CD4-positive, alpha-beta memory T cell (primary cell): ENCODE measurements at regions of chr2 and their contacts with region 1.

Region 1: DNA sequence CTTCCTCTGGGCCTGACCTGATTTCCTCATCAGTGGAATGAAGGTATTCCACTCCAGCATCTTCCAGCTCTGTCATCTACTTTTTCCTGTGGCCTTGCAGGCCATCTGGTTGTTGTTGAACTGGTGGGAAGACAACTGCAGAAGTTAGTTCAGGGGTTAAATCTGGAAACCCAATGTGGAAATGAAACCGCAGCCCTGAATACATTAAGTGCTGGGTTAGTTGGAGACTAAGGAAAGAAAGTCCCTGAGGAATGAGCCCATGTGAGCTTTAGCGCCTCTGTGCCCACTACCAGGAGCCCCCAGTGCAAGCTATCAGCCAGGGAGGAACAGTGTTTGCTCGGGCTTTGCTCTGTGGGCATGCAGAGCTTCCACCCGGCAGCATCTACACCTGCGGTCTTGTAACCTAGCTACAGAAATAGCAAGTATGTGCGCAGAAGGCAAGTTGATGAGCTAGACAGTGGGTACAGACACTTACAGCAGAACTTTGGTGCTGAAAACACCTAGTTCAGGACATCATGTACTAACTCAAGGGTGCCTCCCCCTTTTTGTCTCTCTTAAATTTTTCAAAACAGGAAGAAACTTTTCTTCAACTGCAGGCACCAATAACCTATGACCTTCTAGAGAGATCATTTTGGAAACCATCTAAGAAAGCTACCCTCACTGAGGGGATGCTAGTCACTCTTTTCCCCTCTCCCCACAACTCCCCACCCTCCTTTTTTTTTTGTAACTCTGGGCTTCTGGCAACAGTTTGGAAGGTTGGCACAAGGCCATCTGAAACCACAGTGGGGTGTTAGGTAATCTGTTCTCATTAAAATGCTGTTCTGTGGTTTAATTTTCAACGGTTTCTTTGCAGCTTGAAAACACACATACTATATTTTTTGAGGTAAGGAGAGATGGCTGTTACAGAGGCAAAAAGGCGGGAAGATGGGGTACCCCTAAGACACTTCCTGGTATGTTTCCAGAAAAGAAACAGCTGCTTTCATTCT is 18.3 kb upstream of the CXCR4 start:
- DNase-seq: peak; percentile 93 to 96 (median 95)
- H3K4me3 ChIP-seq: peak overlapping the region in 1 of 2 donors; percentile 18
- H3K4me3 Mint-ChIP-seq: peak overlapping the region; percentile 70 to 92 (median 80)
- H3K27ac ChIP-seq: peak overlapping the region; percentile 95
- H3K27ac Mint-ChIP-seq: peak overlapping the region; percentile 96 to 100 (median 99)
- H3K4me1 ChIP-seq: peaks cover 98% of the 10 kb centered on the region
- H3K4me1 Mint-ChIP-seq: peaks cover 72 to 98% (median 89%) of the 10 kb centered on the region in 4 donors
- H3K27me3 ChIP-seq: no peaks in the 10 kb centered on the region
- H3K27me3 Mint-ChIP-seq: no peaks in the 10 kb centered on the region

Region 2: GRCh38 chr2:134918526-134919340 is 1217.5 kb before region 1 on chr2 and contains the start of gene CCNT2:
- CTCF ChIA-PET with region 1: no interaction called
- POLR2A ChIA-PET with region 1: no interaction called
- intact Hi-C with region 1: loop called (anchors 1 kb)
- DNase-seq: peak; percentile 99 to 100 (median 100)
- H3K4me3 ChIP-seq: peak within 1 kb of the TSS; percentile 68 to 94
- H3K4me3 Mint-ChIP-seq: peak within 1 kb of the TSS; percentile 90 to 99 (median 97)
- H3K27ac ChIP-seq: peak within 1 kb of the TSS; percentile 95
- H3K27ac Mint-ChIP-seq: peak within 1 kb of the TSS; percentile 93 to 99 (median 98)
- H3K4me1 ChIP-seq: peaks cover 52% of the 10 kb centered on the region
- H3K4me1 Mint-ChIP-seq: peaks cover 22 to 61% (median 43%) of the 10 kb centered on the region in 4 donors
- H3K27me3 ChIP-seq: no peaks in the 10 kb centered on the region
- H3K27me3 Mint-ChIP-seq: peaks cover 0 to 4% of the 10 kb centered on the region in 2 donors
- total RNA-seq, gene CCNT2: 75.4 to 80.6 TPM

Region 3: DNA sequence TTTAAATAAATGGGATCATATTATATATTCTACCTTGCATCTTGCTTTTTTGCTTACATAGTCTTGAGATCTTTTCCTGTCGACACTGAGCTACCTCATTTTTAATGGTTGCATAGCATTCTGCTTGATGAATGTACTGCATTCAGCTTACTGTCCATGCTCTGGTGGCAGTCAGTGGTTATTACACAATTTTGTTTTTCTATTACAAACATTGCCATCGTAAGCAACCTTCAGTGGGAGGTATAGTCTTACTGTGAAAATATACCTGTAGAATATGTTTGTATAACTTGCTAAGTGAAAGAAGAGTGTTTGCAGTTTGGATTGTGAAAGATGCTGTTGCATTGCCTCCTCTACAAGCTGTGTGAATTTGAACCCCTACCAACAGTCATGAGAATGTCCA is 351.2 kb before region 1 on chr2:
- CTCF ChIA-PET with region 1: no interaction called
- POLR2A ChIA-PET with region 1: no interaction called
- intact Hi-C with region 1: no loop called
- DNase-seq: peak in 1 of 5 donors; percentile 4
- H3K4me3 ChIP-seq: no peak overlapping the region
- H3K4me3 Mint-ChIP-seq: no peak overlapping the region
- H3K27ac ChIP-seq: no peak overlapping the region
- H3K27ac Mint-ChIP-seq: no peak overlapping the region
- H3K4me1 ChIP-seq: no peaks in the 10 kb centered on the region
- H3K4me1 Mint-ChIP-seq: peaks cover 0 to 3% (median under 1%) of the 10 kb centered on the region in 4 donors
- H3K27me3 ChIP-seq: no peaks in the 10 kb centered on the region
- H3K27me3 Mint-ChIP-seq: no peaks in the 10 kb centered on the region

Region 4: DNA sequence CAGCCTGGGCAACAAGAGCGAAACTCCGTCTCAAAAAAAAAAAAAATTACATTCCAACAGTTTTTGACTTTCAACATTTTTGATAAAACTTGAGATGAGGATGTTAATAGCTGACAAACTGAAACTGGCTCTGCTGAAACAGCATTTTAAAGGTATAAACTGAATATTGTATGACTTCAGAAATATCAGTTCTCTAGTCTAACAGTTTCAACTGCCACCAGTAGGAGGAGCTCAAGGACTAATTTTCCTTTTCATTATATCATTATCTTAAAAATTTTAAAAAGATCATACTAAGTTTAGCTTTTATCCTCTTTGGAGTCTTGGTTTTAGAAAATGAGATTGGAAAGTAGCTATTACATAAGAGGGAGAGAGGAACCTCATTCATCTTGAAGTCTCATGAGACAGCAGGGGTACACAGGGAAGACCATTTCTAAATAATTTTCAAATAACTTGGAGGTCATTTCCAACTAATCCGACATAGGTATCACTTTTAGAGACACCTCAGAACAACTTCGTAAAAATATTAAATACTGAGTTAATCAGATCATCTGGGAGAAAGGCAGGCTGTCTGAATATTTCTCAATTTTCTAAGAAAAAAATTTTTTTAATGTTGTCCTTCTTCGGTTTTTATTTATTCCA is 222.4 kb before region 1 on chr2:
- CTCF ChIA-PET with region 1: interaction called, 3 read pairs
- POLR2A ChIA-PET with region 1: interaction called, 10 read pairs
- intact Hi-C with region 1: loop called (anchors 5 kb)
- DNase-seq: peak; percentile 48 to 61 (median 58)
- H3K4me3 ChIP-seq: no peak overlapping the region
- H3K4me3 Mint-ChIP-seq: no peak overlapping the region
- H3K27ac ChIP-seq: no peak overlapping the region
- H3K27ac Mint-ChIP-seq: peak overlapping the region; percentile 34 to 90 (median 81)
- H3K4me1 ChIP-seq: no peaks in the 10 kb centered on the region
- H3K4me1 Mint-ChIP-seq: peaks cover 0 to 8% (median 3%) of the 10 kb centered on the region in 4 donors
- H3K27me3 ChIP-seq: no peaks in the 10 kb centered on the region
- H3K27me3 Mint-ChIP-seq: no peaks in the 10 kb centered on the region

Region 5: GRCh38 chr2:136057023-136057801 is 79.0 kb before region 1 on chr2:
- CTCF ChIA-PET with region 1: no interaction called
- POLR2A ChIA-PET with region 1: interaction called, 8 read pairs
- intact Hi-C with region 1: loop called (anchors 2 kb)
- DNase-seq: peak; percentile 17 to 52 (median 37)
- H3K4me3 ChIP-seq: peak overlapping the region in 1 of 2 donors; percentile 6
- H3K4me3 Mint-ChIP-seq: peak overlapping the region in 7 of 8 donors; percentile 60 to 73 (median 69)
- H3K27ac ChIP-seq: peak overlapping the region; percentile 42
- H3K27ac Mint-ChIP-seq: peak overlapping the region; percentile 59 to 92 (median 90)
- H3K4me1 ChIP-seq: peaks cover 71% of the 10 kb centered on the region
- H3K4me1 Mint-ChIP-seq: peaks cover 51 to 80% (median 61%) of the 10 kb centered on the region in 4 donors
- H3K27me3 ChIP-seq: no peaks in the 10 kb centered on the region
- H3K27me3 Mint-ChIP-seq: no peaks in the 10 kb centered on the region

Region 6: GRCh38 chr2:136098441-136098840 is 37.8 kb before region 1 on chr2:
- CTCF ChIA-PET with region 1: no interaction called
- POLR2A ChIA-PET with region 1: no interaction called
- intact Hi-C with region 1: no loop called
- DNase-seq: no peak
- H3K4me3 ChIP-seq: no peak overlapping the region
- H3K4me3 Mint-ChIP-seq: no peak overlapping the region
- H3K27ac ChIP-seq: no peak overlapping the region
- H3K27ac Mint-ChIP-seq: peak overlapping the region in 2 of 7 donors; percentile 15 to 49
- H3K4me1 ChIP-seq: no peaks in the 10 kb centered on the region
- H3K4me1 Mint-ChIP-seq: peaks cover 0 to 2% (median under 1%) of the 10 kb centered on the region in 4 donors
- H3K27me3 ChIP-seq: no peaks in the 10 kb centered on the region
- H3K27me3 Mint-ChIP-seq: no peaks in the 10 kb centered on the region

Region 7: GRCh38 chr2:136212423-136213378 is 76.5 kb after region 1 on chr2:
- CTCF ChIA-PET with region 1: interaction called, 6 read pairs
- POLR2A ChIA-PET with region 1: interaction called, 36 read pairs
- intact Hi-C with region 1: loop called (anchors 5 kb)
- DNase-seq: peak; percentile 53 to 70 (median 59)
- H3K4me3 ChIP-seq: no peak overlapping the region
- H3K4me3 Mint-ChIP-seq: peak overlapping the region in 7 of 8 donors; percentile 3 to 76 (median 45)
- H3K27ac ChIP-seq: peak overlapping the region; percentile 39
- H3K27ac Mint-ChIP-seq: peak overlapping the region; percentile 73 to 96 (median 90)
- H3K4me1 ChIP-seq: peaks cover 31% of the 10 kb centered on the region
- H3K4me1 Mint-ChIP-seq: peaks cover 25 to 66% (median 35%) of the 10 kb centered on the region in 4 donors
- H3K27me3 ChIP-seq: no peaks in the 10 kb centered on the region
- H3K27me3 Mint-ChIP-seq: no peaks in the 10 kb centered on the region

Region 8: DNA sequence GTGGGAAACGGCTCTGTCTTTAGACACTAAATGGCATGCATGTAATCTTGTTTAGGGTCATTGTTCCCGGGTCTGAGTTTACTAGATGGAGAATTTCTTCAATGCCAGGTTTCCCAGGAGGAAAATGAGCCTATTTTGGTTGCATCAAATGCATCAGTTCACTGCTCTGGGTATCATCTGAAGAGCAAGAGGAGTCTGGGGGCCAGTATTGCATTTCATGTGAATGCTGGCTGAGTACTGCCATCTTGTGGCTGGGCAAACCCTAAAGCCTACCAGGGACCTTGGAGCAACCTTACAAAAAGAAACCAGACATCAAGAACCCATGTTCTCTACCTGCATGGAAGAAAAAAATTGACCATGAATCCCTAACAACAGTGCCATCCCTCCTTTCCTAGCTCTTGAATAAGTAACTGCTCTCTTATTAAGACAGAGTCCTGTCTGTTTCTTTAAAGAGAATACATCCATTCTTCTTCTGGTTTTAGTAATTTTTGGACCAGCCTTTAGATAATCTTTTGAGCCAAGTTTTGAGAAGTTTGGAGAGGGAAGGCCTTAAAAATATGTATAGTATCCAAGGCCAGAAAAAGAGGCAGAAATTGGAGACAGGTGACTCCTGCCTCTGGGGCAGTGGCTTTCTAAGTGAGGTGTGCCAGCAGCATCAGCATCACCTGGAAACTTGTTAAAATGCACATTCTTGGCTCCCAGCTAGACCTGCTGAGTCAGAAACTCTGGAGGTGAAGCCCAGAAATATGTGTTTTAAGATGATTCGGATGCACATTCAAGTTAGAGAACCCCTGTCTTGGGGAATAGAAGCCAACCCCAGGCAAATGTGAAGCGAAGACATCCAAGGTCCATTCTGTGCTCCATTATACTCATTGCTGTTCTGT is 242.7 kb after region 1 on chr2:
- CTCF ChIA-PET with region 1: interaction called, 18 read pairs
- POLR2A ChIA-PET with region 1: interaction called, 27 read pairs
- intact Hi-C with region 1: loop called (anchors 1 kb)
- DNase-seq: peak; percentile 71 to 78 (median 74)
- H3K4me3 ChIP-seq: no peak overlapping the region
- H3K4me3 Mint-ChIP-seq: no peak overlapping the region
- H3K27ac ChIP-seq: no peak overlapping the region
- H3K27ac Mint-ChIP-seq: peak overlapping the region in 6 of 7 donors; percentile 70 to 89 (median 78)
- H3K4me1 ChIP-seq: peaks cover 55% of the 10 kb centered on the region
- H3K4me1 Mint-ChIP-seq: peaks cover 49 to 79% (median 53%) of the 10 kb centered on the region in 4 donors
- H3K27me3 ChIP-seq: no peaks in the 10 kb centered on the region
- H3K27me3 Mint-ChIP-seq: no peaks in the 10 kb centered on the region